ENCODE measurements at regions of chr10 and their contacts with region 1.

Region 1: GRCh38 chr10:87734987-87735827 is 75.5 kb downstream of the PAPSS2 start:
- DNase-seq: peak in 2 of 9 donors; percentile 2 to 3
- ATAC-seq: peak; percentile 55
- H3K4me3 ChIP-seq: no peak overlapping the region
- H3K4me3 Mint-ChIP-seq: no peak overlapping the region
- H3K27ac ChIP-seq: no peak overlapping the region
- H3K27ac Mint-ChIP-seq: no peak overlapping the region
- H3K4me1 ChIP-seq: no peaks in the 10 kb centered on the region
- H3K4me1 Mint-ChIP-seq: peaks cover 0 to 13% (median 0%) of the 10 kb centered on the region in 7 donors
- H3K27me3 ChIP-seq: no peaks in the 10 kb centered on the region
- H3K27me3 Mint-ChIP-seq: peaks cover 23 to 33% (median 26%) of the 10 kb centered on the region in 5 donors

Region 2: GRCh38 chr10:87531908-87532622 is 203.1 kb before region 1 on chr10:
- CTCF ChIA-PET with region 1: interaction called, 3 read pairs
- POLR2A ChIA-PET with region 1: no interaction called
- intact Hi-C with region 1: loop called (anchors 1 to 10 kb)
- DNase-seq: no peak
- ATAC-seq: no peak
- H3K4me3 ChIP-seq: no peak overlapping the region
- H3K4me3 Mint-ChIP-seq: no peak overlapping the region
- H3K27ac ChIP-seq: no peak overlapping the region
- H3K27ac Mint-ChIP-seq: peak overlapping the region in 1 of 9 donors; percentile 26
- H3K4me1 ChIP-seq: no peaks in the 10 kb centered on the region
- H3K4me1 Mint-ChIP-seq: peaks cover 2 to 22% (median 12%) of the 10 kb centered on the region in 7 donors
- H3K27me3 ChIP-seq: no peaks in the 10 kb centered on the region
- H3K27me3 Mint-ChIP-seq: no peaks in the 10 kb centered on the region

Region 3: GRCh38 chr10:87659571-87660483 is 75.4 kb before region 1 on chr10 and contains the start of gene PAPSS2:
- CTCF ChIA-PET with region 1: no interaction called
- POLR2A ChIA-PET with region 1: no interaction called
- intact Hi-C with region 1: loop called (anchors 1 kb)
- DNase-seq: peak in 6 of 9 donors; percentile 2 to 38 (median 8)
- ATAC-seq: peak; percentile 57
- H3K4me3 ChIP-seq: peak within 1 kb of the TSS; percentile 42
- H3K4me3 Mint-ChIP-seq: peak within 1 kb of the TSS; percentile 72 to 89 (median 80)
- H3K27ac ChIP-seq: no peak within 1 kb of the TSS
- H3K27ac Mint-ChIP-seq: peak within 1 kb of the TSS in 1 of 9 donors; percentile 17
- H3K4me1 ChIP-seq: peaks cover 0 to 7% of the 10 kb centered on the region in 2 donors
- H3K4me1 Mint-ChIP-seq: peaks cover 7 to 14% (median 13%) of the 10 kb centered on the region in 7 donors
- H3K27me3 ChIP-seq: peaks cover 3 to 10% of the 10 kb centered on the region in 2 donors
- H3K27me3 Mint-ChIP-seq: peaks cover 42 to 55% (median 49%) of the 10 kb centered on the region in 5 donors
- total RNA-seq, gene PAPSS2: 0.21 to 1.6 (median 0.57) TPM

Measured in naive thymus-derived CD4-positive, alpha-beta T cell (primary cell).